ENCODE measurements at regions of chr3 and their contacts with region 1.

Region 1: GRCh38 chr3:141192345-141192744 is 39.3 kb upstream of the PXYLP1 start:
- DNase-seq: peak; percentile 88 to 99 (median 95)
- ATAC-seq: peak; percentile 100
- H3K4me3 ChIP-seq: no peak overlapping the region
- H3K4me3 Mint-ChIP-seq: peak overlapping the region in 3 of 10 donors; percentile 5 to 14 (median 5)
- H3K27ac ChIP-seq: no peak overlapping the region
- H3K27ac Mint-ChIP-seq: peak overlapping the region in 6 of 9 donors; percentile 4 to 75 (median 16)
- H3K4me1 ChIP-seq: no peaks in the 10 kb centered on the region
- H3K4me1 Mint-ChIP-seq: peaks cover 0 to 15% (median 13%) of the 10 kb centered on the region in 7 donors
- H3K27me3 ChIP-seq: peaks cover 0 to 5% of the 10 kb centered on the region in 2 donors
- H3K27me3 Mint-ChIP-seq: peaks cover 0 to 23% (median 6%) of the 10 kb centered on the region in 5 donors

Region 2: GRCh38 chr3:139935016-139935865 is 1257.1 kb before region 1 on chr3 and contains the start of gene CLSTN2:
- CTCF ChIA-PET with region 1: no interaction called
- POLR2A ChIA-PET with region 1: no interaction called
- intact Hi-C with region 1: loop called in 1 of 2 experiments (anchors 5 kb)
- DNase-seq: peak in 1 of 9 donors; percentile 33
- ATAC-seq: peak; percentile 36
- H3K4me3 ChIP-seq: no peak within 1 kb of the TSS
- H3K4me3 Mint-ChIP-seq: peak within 1 kb of the TSS in 2 of 10 donors; percentile 38 to 41
- H3K27ac ChIP-seq: no peak within 1 kb of the TSS
- H3K27ac Mint-ChIP-seq: no peak within 1 kb of the TSS
- H3K4me1 ChIP-seq: no peaks in the 10 kb centered on the region
- H3K4me1 Mint-ChIP-seq: peaks cover 0 to 11% (median 3%) of the 10 kb centered on the region in 7 donors
- H3K27me3 ChIP-seq: no peaks in the 10 kb centered on the region
- H3K27me3 Mint-ChIP-seq: peaks cover 47 to 69% (median 56%) of the 10 kb centered on the region in 5 donors
- total RNA-seq, gene CLSTN2: 0.02 TPM in 1 of 5 experiments, not detected in the others

Region 3: DNA sequence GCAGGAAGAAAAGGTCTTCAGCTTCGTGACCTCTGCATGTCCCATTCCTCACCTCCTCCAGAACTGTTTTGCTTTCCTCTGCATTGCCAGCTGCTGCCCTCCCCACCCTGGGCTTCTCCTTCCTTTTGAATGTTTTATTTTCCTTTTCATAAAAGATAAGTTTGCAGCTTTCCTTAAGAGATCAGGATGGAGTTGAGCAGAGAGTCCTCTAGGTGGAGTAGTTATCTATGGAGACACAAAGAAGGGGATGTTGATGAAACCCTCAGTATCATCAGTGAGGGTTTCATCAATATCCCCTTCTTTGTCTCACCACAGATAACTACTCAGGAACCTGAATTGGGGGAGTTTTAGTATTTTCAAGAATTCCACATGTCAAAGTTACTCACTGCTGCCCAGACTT is 269.7 kb before region 1 on chr3:
- CTCF ChIA-PET with region 1: no interaction called
- POLR2A ChIA-PET with region 1: no interaction called
- intact Hi-C with region 1: loop called in 1 of 2 experiments (anchors 1 kb)
- DNase-seq: peak in 4 of 9 donors; percentile 5 to 26 (median 12)
- ATAC-seq: peak; percentile 60
- H3K4me3 ChIP-seq: no peak overlapping the region
- H3K4me3 Mint-ChIP-seq: no peak overlapping the region
- H3K27ac ChIP-seq: no peak overlapping the region
- H3K27ac Mint-ChIP-seq: no peak overlapping the region
- H3K4me1 ChIP-seq: no peaks in the 10 kb centered on the region
- H3K4me1 Mint-ChIP-seq: no peaks in the 10 kb centered on the region
- H3K27me3 ChIP-seq: no peaks in the 10 kb centered on the region
- H3K27me3 Mint-ChIP-seq: peaks cover 11 to 38% (median 21%) of the 10 kb centered on the region in 5 donors

Region 4: GRCh38 chr3:141011232-141011996 is 180.9 kb before region 1 on chr3:
- CTCF ChIA-PET with region 1: interaction called, 7 read pairs
- POLR2A ChIA-PET with region 1: no interaction called
- intact Hi-C with region 1: loop called (anchors 1 kb)
- DNase-seq: peak; percentile 40 to 74 (median 64)
- ATAC-seq: peak; percentile 98
- H3K4me3 ChIP-seq: no peak overlapping the region
- H3K4me3 Mint-ChIP-seq: no peak overlapping the region
- H3K27ac ChIP-seq: no peak overlapping the region
- H3K27ac Mint-ChIP-seq: no peak overlapping the region
- H3K4me1 ChIP-seq: peaks cover 0 to 3% of the 10 kb centered on the region in 2 donors
- H3K4me1 Mint-ChIP-seq: peaks cover 0 to 7% (median 5%) of the 10 kb centered on the region in 7 donors
- H3K27me3 ChIP-seq: peaks cover 0 to 4% of the 10 kb centered on the region in 2 donors
- H3K27me3 Mint-ChIP-seq: peaks cover 16 to 52% (median 25%) of the 10 kb centered on the region in 5 donors

Region 5: DNA sequence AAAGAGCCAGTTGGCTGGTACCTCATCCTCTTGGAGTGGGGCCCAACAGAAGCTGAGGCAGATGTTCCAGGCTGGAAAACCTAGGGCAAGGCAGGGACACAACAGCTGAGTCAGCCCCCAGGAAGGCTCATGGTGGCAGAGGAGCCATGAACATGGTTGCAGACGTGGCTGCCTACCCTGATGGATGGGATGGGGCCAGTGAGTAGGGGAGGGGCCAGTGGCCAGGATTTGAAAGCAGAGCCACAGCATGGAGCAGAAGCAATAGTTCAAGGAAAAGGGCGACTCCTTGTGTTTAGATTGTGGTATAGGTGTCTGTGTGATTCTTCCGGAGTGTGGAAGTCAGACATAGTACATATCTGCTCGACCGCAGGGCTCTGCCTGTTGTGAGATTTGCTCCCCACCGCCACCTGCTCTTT is 63.5 kb after region 1 on chr3:
- CTCF ChIA-PET with region 1: interaction called, 3 read pairs
- POLR2A ChIA-PET with region 1: no interaction called
- intact Hi-C with region 1: loop called (anchors 1 kb)
- DNase-seq: peak in 7 of 9 donors; percentile 54 to 76 (median 67)
- ATAC-seq: peak; percentile 91
- H3K4me3 ChIP-seq: no peak overlapping the region
- H3K4me3 Mint-ChIP-seq: peak overlapping the region in 8 of 10 donors; percentile 38 to 62 (median 52)
- H3K27ac ChIP-seq: peak overlapping the region; percentile 28
- H3K27ac Mint-ChIP-seq: peak overlapping the region; percentile 38 to 92 (median 79)
- H3K4me1 ChIP-seq: peaks cover 0 to 12% of the 10 kb centered on the region in 2 donors
- H3K4me1 Mint-ChIP-seq: peaks cover 16 to 88% (median 45%) of the 10 kb centered on the region in 7 donors
- H3K27me3 ChIP-seq: no peaks in the 10 kb centered on the region
- H3K27me3 Mint-ChIP-seq: no peaks in the 10 kb centered on the region

Region 6: DNA sequence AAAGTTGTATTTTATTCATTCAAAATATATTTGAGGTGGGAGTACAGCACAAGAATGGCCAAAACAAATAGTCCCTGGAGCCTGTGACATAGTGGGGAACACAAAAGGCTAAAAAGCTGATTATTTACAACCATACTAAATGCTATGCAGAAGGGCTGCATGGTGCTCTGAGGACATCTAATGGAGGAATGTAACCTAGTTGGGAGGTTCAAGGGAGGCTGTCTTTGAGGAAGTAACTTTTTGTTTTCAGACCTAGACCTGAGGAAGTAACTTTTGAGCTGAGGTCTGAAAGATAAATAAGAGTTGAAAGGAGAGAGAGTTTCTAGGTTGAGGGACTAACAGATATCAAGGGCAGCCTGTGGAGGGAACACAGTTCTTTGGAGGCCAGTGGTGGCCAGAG is 259.7 kb after region 1 on chr3:
- CTCF ChIA-PET with region 1: no interaction called
- POLR2A ChIA-PET with region 1: no interaction called
- intact Hi-C with region 1: loop called in 1 of 2 experiments (anchors 1 kb)
- DNase-seq: peak in 7 of 9 donors; percentile 45 to 78 (median 64)
- ATAC-seq: peak; percentile 90
- H3K4me3 ChIP-seq: no peak overlapping the region
- H3K4me3 Mint-ChIP-seq: no peak overlapping the region
- H3K27ac ChIP-seq: peak overlapping the region; percentile 10
- H3K27ac Mint-ChIP-seq: no peak overlapping the region
- H3K4me1 ChIP-seq: peaks cover 0 to 10% of the 10 kb centered on the region in 2 donors
- H3K4me1 Mint-ChIP-seq: peaks cover 6 to 20% (median 12%) of the 10 kb centered on the region in 7 donors
- H3K27me3 ChIP-seq: no peaks in the 10 kb centered on the region
- H3K27me3 Mint-ChIP-seq: no peaks in the 10 kb centered on the region